PC-9 (cell line): ENCODE measurements at regions of chr19 and their contacts with region 1.

Region 1: GRCh38 chr19:8252922-8253589 is 43.9 kb downstream of the CERS4 start:
- DNase-seq: peak; percentile 65 to 79
- H3K4me3 ChIP-seq: no peak overlapping the region
- H3K27ac ChIP-seq: no peak overlapping the region
- H3K4me1 ChIP-seq: no peaks in the 10 kb centered on the region
- H3K27me3 ChIP-seq: no peaks in the 10 kb centered on the region
- CTCF ChIP-seq: peak; percentile 99

Region 2: DNA sequence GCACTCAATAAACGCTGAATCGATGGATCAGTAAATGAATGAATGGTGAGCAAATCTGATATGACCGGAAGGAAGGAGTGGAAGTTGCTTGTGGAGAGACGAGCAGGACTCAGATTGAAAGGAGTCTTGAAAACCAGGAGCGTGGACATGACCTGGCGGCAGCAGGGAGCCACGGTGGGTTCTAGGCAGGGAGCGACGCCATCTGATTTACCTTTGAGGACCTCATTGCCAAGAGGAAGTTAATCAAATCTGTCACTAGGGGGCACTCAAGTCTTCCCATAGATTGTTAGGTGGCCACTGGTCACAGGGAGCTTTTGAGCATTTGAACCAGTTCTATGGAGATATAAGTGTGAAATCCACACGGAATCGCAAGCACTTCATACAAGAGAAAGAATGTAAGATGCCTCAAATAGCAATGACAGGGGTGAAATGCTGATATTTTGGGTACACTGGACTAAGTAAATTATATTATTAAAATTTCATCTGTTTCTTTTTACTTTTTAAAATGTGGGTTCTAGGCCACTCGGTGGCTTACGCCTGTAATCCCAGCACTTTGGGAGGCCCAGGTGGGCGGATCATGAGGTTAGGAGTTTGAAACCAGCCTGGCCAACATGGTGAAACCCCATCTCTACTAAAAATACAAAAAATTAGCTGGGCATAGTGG is 94.5 kb before region 1 on chr19:
- CTCF ChIA-PET with region 1: interaction called, 3 read pairs
- POLR2A ChIA-PET with region 1: no interaction called
- intact Hi-C with region 1: loop called (anchors 1 kb)
- DNase-seq: peak; percentile 42 to 75
- H3K4me3 ChIP-seq: no peak overlapping the region
- H3K27ac ChIP-seq: no peak overlapping the region
- H3K4me1 ChIP-seq: peaks cover 25% of the 10 kb centered on the region
- H3K27me3 ChIP-seq: no peaks in the 10 kb centered on the region
- CTCF ChIP-seq: peak; percentile 91

Region 3: DNA sequence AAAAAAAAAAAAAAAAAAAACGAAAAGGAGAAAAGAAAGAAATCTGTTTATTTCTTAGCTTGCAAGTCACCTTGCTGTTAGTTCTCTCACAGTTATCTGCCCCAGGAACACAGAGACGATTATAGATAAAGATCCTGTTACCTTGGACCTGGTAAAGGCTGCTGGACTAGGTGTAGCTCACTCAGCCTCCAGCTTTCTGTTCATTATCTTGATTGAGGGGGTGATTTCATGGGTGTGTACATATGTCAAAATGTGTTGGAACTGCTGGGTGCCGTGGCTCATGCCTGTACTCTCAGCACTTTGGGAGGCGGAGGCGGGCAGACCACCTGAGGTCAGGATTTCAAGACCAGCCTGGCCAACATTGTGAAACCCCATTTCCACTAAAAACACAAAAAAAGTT is 16.0 kb before region 1 on chr19:
- CTCF ChIA-PET with region 1: interaction called, 11 read pairs
- POLR2A ChIA-PET with region 1: no interaction called
- intact Hi-C with region 1: no loop called
- DNase-seq: no peak
- H3K4me3 ChIP-seq: no peak overlapping the region
- H3K27ac ChIP-seq: no peak overlapping the region
- H3K4me1 ChIP-seq: peaks cover 13% of the 10 kb centered on the region
- H3K27me3 ChIP-seq: no peaks in the 10 kb centered on the region
- CTCF ChIP-seq: no peak

Region 4: DNA sequence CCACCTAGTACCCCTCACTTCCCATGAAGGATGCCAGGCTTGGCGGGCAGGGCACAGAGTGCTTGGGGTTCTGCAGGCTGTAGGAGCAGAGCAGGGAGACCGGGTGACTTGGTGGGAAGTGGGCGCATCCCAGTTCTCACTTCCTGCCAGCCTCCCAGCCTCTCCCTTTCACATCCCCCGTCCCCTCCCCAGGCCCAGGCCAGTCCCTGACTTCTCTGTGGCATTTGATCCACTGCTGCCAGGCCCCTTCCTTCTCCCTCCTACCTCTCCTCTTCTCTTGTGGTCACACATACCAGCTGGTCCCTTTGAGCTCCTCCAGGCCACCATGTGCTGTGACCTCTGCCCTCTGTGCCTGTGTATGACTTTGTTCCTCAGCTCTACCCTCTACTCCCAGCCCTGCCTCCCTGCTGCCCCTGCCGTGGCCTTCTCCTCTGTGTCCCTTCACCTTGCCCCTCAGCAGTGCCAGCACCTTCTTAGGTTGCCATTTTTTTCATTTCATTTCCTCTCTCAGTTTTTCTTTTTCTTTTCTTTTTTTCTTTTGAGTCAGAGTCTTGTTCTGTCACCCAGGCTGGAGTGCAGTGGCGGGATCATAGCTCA is 304.7 kb after region 1 on chr19:
- CTCF ChIA-PET with region 1: no interaction called
- POLR2A ChIA-PET with region 1: no interaction called
- intact Hi-C with region 1: no loop called
- DNase-seq: no peak
- H3K4me3 ChIP-seq: no peak overlapping the region
- H3K27ac ChIP-seq: no peak overlapping the region
- H3K4me1 ChIP-seq: no peaks in the 10 kb centered on the region
- H3K27me3 ChIP-seq: no peaks in the 10 kb centered on the region
- CTCF ChIP-seq: no peak